Spleen (tissue), 13 donors: ENCODE measurements at regions of chr5 and their contacts with region 1.

Region 1: GRCh38 chr5:116947691-116948528 is 373.3 kb upstream of the SEMA6A start:
- DNase-seq: peak; percentile 82
- H3K4me3 ChIP-seq: no peak overlapping the region
- H3K27ac ChIP-seq: no peak overlapping the region
- H3K4me1 ChIP-seq: peaks cover 0 to 4% (median 3%) of the 10 kb centered on the region in 6 donors
- H3K27me3 ChIP-seq: no peaks in the 10 kb centered on the region
- CTCF ChIP-seq: peak in 10 of 11 experiments; percentile 12 to 77 (median 70)
- POLR2A ChIP-seq: no peak

Region 2: DNA sequence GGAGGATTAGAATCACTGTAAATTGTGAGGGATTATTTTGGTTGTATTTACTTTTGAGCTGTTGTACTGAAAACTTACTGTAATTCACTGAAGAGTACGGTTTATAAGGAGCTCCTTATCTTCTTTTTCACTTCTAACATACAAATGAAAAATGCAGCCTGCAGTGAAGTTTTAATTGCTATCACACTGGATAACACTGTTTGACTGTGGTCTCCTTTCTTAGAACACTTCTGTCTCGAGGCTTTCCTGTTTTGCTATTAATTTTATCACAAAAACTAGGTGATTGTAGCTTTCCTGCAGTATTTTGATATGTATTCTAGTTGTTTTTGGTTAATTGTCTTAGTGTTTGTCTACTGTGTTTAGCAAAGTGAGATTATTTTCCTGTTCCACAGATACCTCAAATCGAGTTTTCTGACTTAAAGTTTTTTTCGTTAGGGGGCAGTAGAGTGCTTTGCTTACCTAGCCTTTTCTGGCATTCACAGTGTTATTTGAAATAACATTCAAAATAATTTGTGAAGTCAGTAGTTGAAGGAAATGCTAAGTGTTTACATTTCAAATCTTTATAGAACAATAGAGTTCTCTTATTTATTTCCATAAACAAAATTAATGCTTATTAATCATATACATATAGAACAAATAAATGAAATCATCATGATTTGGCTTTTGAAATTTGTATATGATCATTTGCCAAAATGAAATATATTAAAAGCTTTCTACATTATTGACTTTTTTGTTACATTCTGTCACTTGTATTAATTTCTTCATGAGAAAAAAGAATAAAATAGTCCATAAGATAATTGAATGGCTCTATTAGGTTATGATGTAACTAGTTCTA is 810.1 kb before region 1 on chr5:
- intact Hi-C with region 1: loop called (anchors 10 kb)
- DNase-seq: no peak
- H3K4me3 ChIP-seq: no peak overlapping the region
- H3K27ac ChIP-seq: no peak overlapping the region
- H3K4me1 ChIP-seq: peaks cover 0 to 34% (median 20%) of the 10 kb centered on the region in 6 donors
- H3K27me3 ChIP-seq: no peaks in the 10 kb centered on the region
- CTCF ChIP-seq: peak in 10 of 11 experiments; percentile 23 to 74 (median 62)
- POLR2A ChIP-seq: no peak

Region 3: GRCh38 chr5:116622375-116623050 is 325.4 kb before region 1 on chr5:
- intact Hi-C with region 1: no loop called
- DNase-seq: no peak
- H3K4me3 ChIP-seq: no peak overlapping the region
- H3K27ac ChIP-seq: no peak overlapping the region
- H3K4me1 ChIP-seq: peaks cover 0 to 16% (median 9%) of the 10 kb centered on the region in 6 donors
- H3K27me3 ChIP-seq: no peaks in the 10 kb centered on the region
- CTCF ChIP-seq: no peak
- POLR2A ChIP-seq: no peak

Region 4: DNA sequence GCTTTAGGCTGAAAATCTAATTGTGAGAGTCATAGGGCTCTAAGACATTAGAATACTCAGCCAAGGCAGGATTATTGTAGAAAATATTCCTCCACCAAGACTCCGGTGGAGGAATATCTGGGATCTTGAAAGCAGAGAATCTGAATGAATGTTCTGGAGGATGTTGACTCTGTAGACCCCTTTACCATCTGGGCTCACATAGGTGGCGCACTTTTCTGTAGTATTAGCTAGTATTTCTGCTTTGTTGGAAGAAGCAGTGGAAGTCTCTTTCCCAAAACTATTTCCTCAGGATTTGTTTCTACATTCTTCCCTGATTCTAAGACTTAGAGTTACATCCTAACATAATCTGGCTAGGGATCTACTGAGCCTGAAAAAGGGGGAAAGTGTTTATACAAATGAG is 379.1 kb after region 1 on chr5:
- intact Hi-C with region 1: no loop called
- DNase-seq: no peak
- H3K4me3 ChIP-seq: no peak overlapping the region
- H3K27ac ChIP-seq: no peak overlapping the region
- H3K4me1 ChIP-seq: no peaks in the 10 kb centered on the region
- H3K27me3 ChIP-seq: no peaks in the 10 kb centered on the region
- CTCF ChIP-seq: no peak
- POLR2A ChIP-seq: no peak